WTC11 (cell line): ENCODE measurements at regions of chr20 and their contacts with region 1.

Region 1: DNA sequence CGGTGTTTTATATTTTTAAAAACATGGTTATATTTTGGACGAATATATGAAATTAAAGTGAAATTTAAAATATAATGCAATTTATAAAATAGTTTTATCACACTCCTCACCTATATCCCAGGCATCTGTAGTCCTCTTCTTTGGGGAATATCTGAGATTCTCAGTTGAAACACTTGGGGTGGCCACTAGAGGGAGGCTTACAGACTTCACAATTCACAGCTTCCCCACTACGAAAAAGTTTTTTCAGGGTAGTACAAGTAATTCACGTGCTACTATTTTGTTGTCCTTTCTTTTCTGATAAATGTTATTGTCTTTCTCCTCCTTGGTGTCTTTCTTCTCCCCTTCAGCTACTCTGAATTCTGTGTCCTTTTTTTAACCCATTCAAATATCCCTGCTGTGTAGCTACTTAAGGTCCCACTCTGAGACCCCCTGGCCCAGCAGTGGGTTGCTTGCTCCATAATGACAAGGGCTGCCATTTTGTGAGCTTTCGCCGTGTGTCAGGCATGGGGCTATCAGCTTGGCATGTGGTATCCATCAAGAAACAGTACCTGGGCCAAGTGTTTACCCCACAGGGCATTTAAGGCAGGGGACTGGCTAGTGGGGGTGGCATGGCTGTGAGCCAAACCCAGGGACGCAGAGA is 43.6 kb upstream of the PHACTR3 start:
- DNase-seq: no peak
- ATAC-seq: peak; percentile 55; the same call in 1 of the 2 replicates
- H3K4me3 Mint-ChIP-seq: no peak overlapping the region
- H3K27ac Mint-ChIP-seq: no peak overlapping the region
- H3K4me1 Mint-ChIP-seq: peaks cover 4% of the 10 kb centered on the region
- H3K27me3 Mint-ChIP-seq: peaks cover 18% of the 10 kb centered on the region
- CTCF ChIP-seq: peak; percentile 48

Region 2: DNA sequence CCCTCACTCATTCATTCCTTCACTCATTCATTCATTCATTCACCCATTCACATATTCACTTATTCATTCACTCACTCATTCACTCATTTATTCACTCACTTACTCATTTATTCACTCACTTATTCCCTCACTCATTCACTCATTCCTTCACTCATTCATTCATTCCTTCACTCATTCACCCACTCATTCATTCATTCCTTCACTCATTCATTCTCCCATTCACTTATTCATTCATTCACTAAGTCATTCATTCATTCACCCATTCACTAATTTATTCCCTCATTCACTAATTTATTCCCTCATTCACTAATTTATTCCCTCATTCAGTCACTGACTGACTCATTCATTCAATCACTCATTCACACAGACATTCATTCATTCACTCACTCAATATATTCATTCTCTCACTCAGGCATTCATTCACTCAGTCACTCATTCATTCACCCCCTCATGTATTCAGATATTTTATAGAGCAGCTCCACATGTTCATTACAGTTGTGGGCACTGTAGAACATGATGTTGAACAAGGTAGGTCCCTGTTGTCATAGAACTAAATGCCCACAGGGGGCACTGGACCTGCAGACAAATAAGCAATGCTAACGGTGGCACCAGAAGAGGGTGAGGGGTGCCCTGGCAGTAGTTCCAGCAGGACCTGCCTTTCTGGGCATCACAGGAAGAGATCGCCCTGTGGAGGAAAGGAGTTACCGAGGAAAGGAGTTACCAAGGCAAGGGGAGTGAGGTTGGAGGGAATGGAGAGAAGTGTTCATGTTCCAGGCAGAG is 132.5 kb before region 1 on chr20:
- CTCF ChIA-PET with region 1: no interaction called
- POLR2A ChIA-PET with region 1: no interaction called
- DNase-seq: no peak
- ATAC-seq: no peak
- H3K4me3 Mint-ChIP-seq: no peak overlapping the region
- H3K27ac Mint-ChIP-seq: no peak overlapping the region
- H3K4me1 Mint-ChIP-seq: peaks cover 3% of the 10 kb centered on the region; the same call in 1 of the 2 replicates
- H3K27me3 Mint-ChIP-seq: peaks cover 14% of the 10 kb centered on the region
- CTCF ChIP-seq: no peak

Region 3: DNA sequence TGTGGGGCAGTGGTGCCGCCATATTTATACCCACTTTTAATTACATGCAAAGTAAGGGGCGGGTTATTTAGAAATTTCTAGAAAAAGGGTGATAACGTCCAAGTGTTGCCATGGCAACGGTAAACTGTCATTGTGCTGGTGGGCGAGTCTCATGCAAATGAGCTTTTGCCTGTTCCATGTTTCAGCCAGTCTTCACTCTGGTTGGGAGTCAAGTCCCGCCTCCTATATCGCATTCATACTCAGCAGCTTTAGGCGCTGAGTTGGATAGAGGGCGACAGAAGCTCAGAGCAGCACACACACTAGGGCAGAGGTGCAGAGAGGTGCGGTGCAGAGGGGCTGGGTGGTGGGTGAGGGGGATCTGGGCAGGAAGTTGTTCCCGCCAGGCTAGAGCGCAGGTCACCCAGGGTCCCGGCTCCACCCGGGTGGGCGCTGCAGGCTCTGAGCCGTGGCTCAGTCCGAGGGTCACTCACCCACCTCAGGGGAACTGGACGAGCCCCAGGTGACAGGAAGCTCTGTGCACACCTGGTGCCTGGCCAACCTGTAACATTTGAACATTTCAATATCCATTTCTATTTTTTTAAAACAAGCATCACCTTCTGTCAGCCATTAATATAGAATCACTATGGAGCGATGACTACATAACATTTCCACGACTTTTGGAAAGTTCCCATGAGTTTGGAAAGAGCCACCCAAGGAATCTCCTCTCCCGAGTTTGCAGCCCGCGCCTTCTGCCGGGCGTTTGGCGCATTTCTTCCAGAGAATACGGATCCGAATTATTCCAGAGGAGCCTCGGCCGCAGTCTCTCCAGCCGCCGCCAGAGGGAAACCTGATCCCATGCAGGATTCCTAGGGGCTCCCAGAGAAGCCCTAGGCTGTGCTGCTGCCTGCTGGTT is 45.4 kb before region 1 on chr20:
- CTCF ChIA-PET with region 1: interaction called, 10 read pairs
- POLR2A ChIA-PET with region 1: no interaction called
- DNase-seq: peak; percentile 91
- ATAC-seq: peak; percentile 89
- H3K4me3 Mint-ChIP-seq: peak overlapping the region; percentile 63
- H3K27ac Mint-ChIP-seq: no peak overlapping the region
- H3K4me1 Mint-ChIP-seq: peaks cover 11% of the 10 kb centered on the region
- H3K27me3 Mint-ChIP-seq: peaks cover 22% of the 10 kb centered on the region
- CTCF ChIP-seq: peak; percentile 60

Region 4: DNA sequence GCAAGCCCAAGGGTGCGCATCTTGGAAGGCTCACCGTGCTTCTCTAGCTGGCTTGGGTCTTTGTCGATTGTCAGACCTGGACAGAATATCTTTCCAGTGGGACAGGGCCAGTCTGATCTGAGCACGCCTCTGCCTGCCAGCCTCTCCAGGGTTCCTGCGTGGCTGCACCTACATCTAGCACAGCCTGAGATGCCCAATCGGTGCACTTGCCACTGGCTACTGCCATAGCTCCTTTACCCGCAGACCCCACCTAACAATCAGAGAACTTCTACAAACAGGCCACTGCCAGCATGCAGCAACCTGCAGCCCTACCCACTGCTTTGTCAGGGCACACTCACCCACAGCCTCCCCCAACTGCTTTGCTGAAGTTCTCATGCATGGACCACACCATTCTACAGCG is 13.1 kb before region 1 on chr20:
- CTCF ChIA-PET with region 1: interaction called, 14 read pairs
- POLR2A ChIA-PET with region 1: no interaction called
- DNase-seq: no peak
- ATAC-seq: no peak
- H3K4me3 Mint-ChIP-seq: no peak overlapping the region
- H3K27ac Mint-ChIP-seq: no peak overlapping the region
- H3K4me1 Mint-ChIP-seq: no peaks in the 10 kb centered on the region
- H3K27me3 Mint-ChIP-seq: peaks cover 37% of the 10 kb centered on the region
- CTCF ChIP-seq: no peak

Region 5: GRCh38 chr20:59571551-59572314 is 11.0 kb after region 1 on chr20:
- CTCF ChIA-PET with region 1: interaction called, 43 read pairs
- POLR2A ChIA-PET with region 1: no interaction called
- DNase-seq: peak; percentile 84
- ATAC-seq: peak; percentile 87
- H3K4me3 Mint-ChIP-seq: peak overlapping the region; percentile 62
- H3K27ac Mint-ChIP-seq: no peak overlapping the region
- H3K4me1 Mint-ChIP-seq: peaks cover 11% of the 10 kb centered on the region
- H3K27me3 Mint-ChIP-seq: peaks cover 80% of the 10 kb centered on the region
- CTCF ChIP-seq: peak; percentile 95

Region 6: GRCh38 chr20:59580553-59580946 is 19.8 kb after region 1 on chr20:
- CTCF ChIA-PET with region 1: interaction called, 14 read pairs
- POLR2A ChIA-PET with region 1: no interaction called
- DNase-seq: no peak
- ATAC-seq: no peak
- H3K4me3 Mint-ChIP-seq: no peak overlapping the region
- H3K27ac Mint-ChIP-seq: no peak overlapping the region
- H3K4me1 Mint-ChIP-seq: peaks cover 4% of the 10 kb centered on the region; the same call in 1 of the 2 replicates
- H3K27me3 Mint-ChIP-seq: peaks cover 70% of the 10 kb centered on the region
- CTCF ChIP-seq: no peak

Region 7: GRCh38 chr20:59678288-59678687 is 117.6 kb after region 1 on chr20:
- CTCF ChIA-PET with region 1: no interaction called
- POLR2A ChIA-PET with region 1: no interaction called
- DNase-seq: no peak
- ATAC-seq: no peak
- H3K4me3 Mint-ChIP-seq: no peak overlapping the region
- H3K27ac Mint-ChIP-seq: no peak overlapping the region
- H3K4me1 Mint-ChIP-seq: no peaks in the 10 kb centered on the region
- H3K27me3 Mint-ChIP-seq: peaks cover 51% of the 10 kb centered on the region
- CTCF ChIP-seq: no peak